ENCODE measurements at regions of chr13 and their contacts with region 1.

Region 1: GRCh38 chr13:30132623-30133553 is 174.5 kb downstream of the KATNAL1 start:
- DNase-seq: peak; percentile 87 to 98 (median 95)
- ATAC-seq: peak; percentile 99 to 100
- H3K4me3 Mint-ChIP-seq: peak overlapping the region; percentile 33 to 78 (median 60)
- H3K27ac Mint-ChIP-seq: peak overlapping the region in 8 of 10 donors; percentile 29 to 89 (median 66)
- H3K4me1 Mint-ChIP-seq: peaks cover 5 to 20% (median 17%) of the 10 kb centered on the region in 4 donors
- H3K27me3 Mint-ChIP-seq: no peaks in the 10 kb centered on the region

Region 2: GRCh38 chr13:30145709-30146367 is 12.9 kb after region 1 on chr13:
- POLR2A ChIA-PET with region 1: interaction called, 39 read pairs
- DNase-seq: no peak
- ATAC-seq: no peak
- H3K4me3 Mint-ChIP-seq: peak overlapping the region in 6 of 10 donors; percentile 11 to 68 (median 40)
- H3K27ac Mint-ChIP-seq: peak overlapping the region; percentile 70 to 98 (median 94)
- H3K4me1 Mint-ChIP-seq: peaks cover 44 to 93% (median 83%) of the 10 kb centered on the region in 4 donors
- H3K27me3 Mint-ChIP-seq: no peaks in the 10 kb centered on the region

Region 3: DNA sequence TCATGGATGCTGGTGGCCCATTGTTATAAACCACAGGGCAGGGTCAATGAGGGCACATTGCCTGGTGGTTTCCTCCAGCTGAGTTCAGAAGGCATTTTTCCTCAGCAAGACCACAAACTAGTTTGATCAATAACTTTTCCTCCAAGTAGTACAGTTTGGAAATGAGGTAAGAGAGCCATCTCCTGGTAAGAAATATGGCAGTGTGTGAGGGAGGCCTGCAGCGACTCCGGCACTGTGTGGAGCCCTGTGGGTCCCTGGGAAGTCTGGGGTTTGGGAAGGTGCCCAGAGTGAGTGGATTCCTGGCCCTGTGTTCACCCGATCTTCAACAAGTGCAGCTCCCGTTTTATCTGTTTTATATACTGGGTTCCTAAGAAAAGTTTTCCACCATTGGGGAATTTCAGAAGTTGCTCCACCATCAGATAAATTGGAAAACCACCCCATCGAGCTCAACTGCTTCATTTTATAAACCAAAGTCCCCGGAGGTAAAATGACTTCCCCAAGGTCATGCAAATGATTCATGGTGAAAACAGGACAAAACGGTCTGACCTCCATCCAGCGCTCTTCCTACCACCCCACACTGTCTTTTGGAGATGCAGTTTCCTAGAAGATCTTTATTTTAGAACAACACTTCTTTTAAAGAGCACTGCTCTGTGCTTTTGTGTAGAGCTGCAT is 26.0 kb after region 1 on chr13:
- POLR2A ChIA-PET with region 1: interaction called, 13 read pairs
- DNase-seq: peak in 2 of 10 donors; percentile 31 to 34
- ATAC-seq: peak; percentile 46 to 70
- H3K4me3 Mint-ChIP-seq: peak overlapping the region in 1 of 10 donors; percentile 9
- H3K27ac Mint-ChIP-seq: peak overlapping the region in 6 of 10 donors; percentile 7 to 92 (median 67)
- H3K4me1 Mint-ChIP-seq: peaks cover 17 to 43% (median 34%) of the 10 kb centered on the region in 4 donors
- H3K27me3 Mint-ChIP-seq: no peaks in the 10 kb centered on the region

Region 4: GRCh38 chr13:30465585-30466357 is 332.9 kb after region 1 on chr13 and contains the start of gene HMGB1:
- POLR2A ChIA-PET with region 1: interaction called, 12 read pairs
- DNase-seq: peak; percentile 86 to 99 (median 96)
- ATAC-seq: peak; percentile 87 to 88
- H3K4me3 Mint-ChIP-seq: peak within 1 kb of the TSS; percentile 88 to 99 (median 96)
- H3K27ac Mint-ChIP-seq: peak within 1 kb of the TSS; percentile 97 to 99 (median 98)
- H3K4me1 Mint-ChIP-seq: peaks cover 10 to 47% (median 24%) of the 10 kb centered on the region in 4 donors
- H3K27me3 Mint-ChIP-seq: peaks cover 0 to 13% (median 0%) of the 10 kb centered on the region in 5 donors
- polyA plus RNA-seq, gene HMGB1: 468 to 703 (median 554) TPM

Region 5: GRCh38 chr13:30673669-30674521 is 541.0 kb after region 1 on chr13:
- POLR2A ChIA-PET with region 1: interaction called, 10 read pairs
- DNase-seq: peak; percentile 74 to 93 (median 88)
- ATAC-seq: peak; percentile 92
- H3K4me3 Mint-ChIP-seq: peak overlapping the region; percentile 75 to 95 (median 88)
- H3K27ac Mint-ChIP-seq: peak overlapping the region; percentile 87 to 99 (median 90)
- H3K4me1 Mint-ChIP-seq: peaks cover 8 to 32% (median 24%) of the 10 kb centered on the region in 4 donors
- H3K27me3 Mint-ChIP-seq: peaks cover 0 to 3% (median 0%) of the 10 kb centered on the region in 5 donors